ENCODE measurements at regions of chr12 and their contacts with region 1.

Region 1: DNA sequence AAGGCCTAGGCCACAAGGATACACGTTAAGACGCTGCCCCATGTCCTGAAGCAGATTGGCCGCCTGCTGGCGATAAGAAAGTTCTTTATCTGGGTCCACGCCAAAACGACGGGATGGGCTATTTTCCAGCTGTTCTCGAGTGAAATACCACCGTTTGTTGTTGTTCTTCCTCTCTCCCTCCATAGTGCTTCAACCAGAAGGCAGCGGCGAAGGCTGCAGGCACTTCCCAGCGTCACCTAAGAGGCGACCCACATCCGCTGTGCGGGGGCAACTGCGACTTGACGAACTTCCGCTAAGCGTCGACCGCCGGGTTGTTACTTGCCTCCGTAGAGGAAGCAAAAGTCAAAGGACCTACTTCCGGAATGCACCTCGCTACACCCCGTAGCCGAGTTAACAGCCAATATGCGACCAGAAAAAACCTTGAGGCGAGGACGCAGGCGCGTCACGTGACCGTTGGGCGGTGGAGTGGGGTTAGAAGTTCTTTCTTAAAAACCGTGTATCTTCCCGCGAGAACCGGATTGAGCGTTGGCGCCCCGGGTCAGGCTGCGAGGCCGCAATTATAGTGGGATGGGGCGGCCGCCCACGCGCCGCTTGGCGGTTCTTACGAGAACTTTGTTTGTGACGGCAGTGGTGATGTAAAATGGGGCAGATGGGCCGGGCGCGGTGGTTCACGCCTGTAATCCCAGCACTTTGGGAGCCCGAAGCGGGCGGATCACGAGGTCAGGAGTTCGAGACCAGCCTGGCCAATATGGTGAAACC is at the start of gene CCNT1:
- DNase-seq: peak; percentile 99
- total RNA-seq, gene CCNT1: 23.5 TPM

Region 2: DNA sequence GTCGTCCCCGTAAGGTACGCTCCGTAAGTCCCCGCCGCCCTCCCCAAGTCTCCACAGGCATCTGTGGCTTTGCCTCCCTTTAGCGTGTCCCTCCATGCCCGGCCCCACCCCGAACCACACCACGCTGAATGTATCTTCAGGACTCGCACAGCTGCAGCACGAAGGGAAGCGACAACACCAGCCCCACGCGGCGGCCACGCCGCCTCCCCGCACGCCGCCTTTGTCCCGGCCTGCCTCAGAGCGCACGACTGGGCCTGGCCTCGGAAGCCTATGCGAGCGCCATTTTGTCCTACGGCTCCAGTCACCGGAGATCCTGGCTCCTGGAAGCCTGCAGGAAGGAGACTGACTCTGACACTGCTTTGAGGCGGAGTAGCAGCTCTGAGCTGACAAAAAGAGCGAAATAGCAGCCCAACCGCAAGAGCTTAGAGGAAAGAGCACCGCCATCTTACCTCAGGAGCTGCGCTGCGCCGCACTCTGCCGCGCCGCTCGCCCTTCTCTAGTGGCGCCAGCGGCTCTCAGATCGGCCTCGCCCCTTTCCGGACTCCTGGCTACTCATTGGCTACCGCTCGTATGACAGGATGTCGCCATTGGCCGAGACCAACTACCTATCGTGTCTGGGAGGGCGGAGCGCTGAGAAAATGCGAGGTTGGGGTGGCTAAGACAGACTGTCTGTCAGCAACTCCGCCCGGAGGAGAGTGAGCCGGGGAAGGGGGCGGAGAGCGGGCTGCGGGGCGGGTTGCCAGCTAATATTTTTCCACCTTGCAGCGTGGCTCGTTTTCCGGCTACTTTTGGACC is 34.7 kb before region 1 on chr12 and contains the start of gene KANSL2:
- intact Hi-C with region 1: loop called (anchors 5 kb)
- DNase-seq: peak; percentile 99
- total RNA-seq, gene KANSL2: 24.8 TPM

Region 3: GRCh38 chr12:48788854-48789796 is 72.5 kb after region 1 on chr12 and contains the start of gene ADCY6:
- intact Hi-C with region 1: loop called (anchors 2 kb)
- DNase-seq: peak; percentile 91
- total RNA-seq, gene ADCY6: 195 TPM

Measured in cardiac septum (tissue), 1 donor.